WTC11 (cell line): ENCODE measurements at regions of chr7 and their contacts with region 1.

Region 1: DNA sequence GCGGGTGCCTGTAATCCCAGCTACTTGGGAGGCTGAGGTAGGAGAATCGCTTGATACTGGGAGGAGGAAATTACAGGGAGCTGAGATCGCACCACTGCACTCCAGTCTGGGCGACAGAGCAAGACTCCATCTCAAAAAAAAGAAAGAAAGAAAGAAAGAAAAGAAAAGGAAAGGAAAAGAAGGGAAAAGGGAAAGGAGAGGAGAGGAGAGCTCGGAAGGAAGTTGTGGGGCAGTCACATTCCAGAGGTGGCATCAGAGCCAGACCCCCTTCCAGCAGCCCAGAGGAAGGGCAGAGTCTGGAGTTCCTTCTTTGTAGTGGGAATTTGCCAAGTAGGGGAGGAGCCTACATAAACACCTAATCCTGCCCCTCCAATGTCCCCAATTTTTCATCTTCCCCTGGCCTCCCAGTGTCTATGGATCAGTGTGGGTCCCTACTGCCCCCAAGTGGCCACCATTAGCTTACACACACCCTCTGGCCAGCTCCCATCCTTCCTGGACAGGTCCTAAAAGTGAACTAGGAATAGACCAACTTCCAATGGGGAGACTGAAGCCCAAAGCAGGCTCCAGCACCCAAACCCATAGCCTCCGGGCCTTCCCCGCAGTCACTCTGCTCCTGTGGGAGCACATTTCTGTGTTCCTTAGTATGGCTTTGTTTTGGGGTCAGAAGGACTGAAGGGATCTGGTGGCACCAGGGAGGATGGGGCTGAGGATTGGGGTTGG is 39.6 kb upstream of the HSPB1 start:
- DNase-seq: peak; percentile 82
- ATAC-seq: peak; percentile 50
- H3K4me3 Mint-ChIP-seq: no peak overlapping the region
- H3K27ac Mint-ChIP-seq: peak overlapping the region; percentile 79; the same call in 1 of the 2 replicates
- H3K4me1 Mint-ChIP-seq: peaks cover 32% of the 10 kb centered on the region
- H3K27me3 Mint-ChIP-seq: no peaks in the 10 kb centered on the region; the same call in 1 of the 2 replicates
- CTCF ChIP-seq: peak; percentile 77

Region 2: DNA sequence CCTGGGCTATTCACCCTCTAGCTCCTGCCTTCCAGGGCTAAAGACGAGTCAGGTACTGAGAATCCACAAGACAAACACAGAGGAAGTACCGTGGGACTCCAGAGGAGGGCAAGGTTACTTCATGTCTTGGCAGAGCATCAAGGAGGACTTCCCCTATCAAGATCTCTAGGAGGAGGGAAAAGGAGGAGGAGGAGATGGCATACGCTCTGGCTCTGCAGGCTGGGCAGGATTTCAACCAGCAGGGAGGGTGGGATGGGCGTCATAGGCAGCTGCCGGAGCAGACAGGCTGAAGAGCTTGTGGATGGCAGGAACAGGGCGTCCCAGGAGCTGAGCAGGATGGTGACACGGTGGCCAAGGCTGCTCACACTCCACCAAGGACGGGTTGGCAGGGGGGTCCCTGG is 193.6 kb before region 1 on chr7:
- CTCF ChIA-PET with region 1: interaction called, 23 read pairs
- POLR2A ChIA-PET with region 1: interaction called, 4 read pairs
- DNase-seq: peak; percentile 43
- ATAC-seq: peak; percentile 64
- H3K4me3 Mint-ChIP-seq: no peak overlapping the region
- H3K27ac Mint-ChIP-seq: peak overlapping the region; percentile 57; the same call in 1 of the 2 replicates
- H3K4me1 Mint-ChIP-seq: peaks cover 3% of the 10 kb centered on the region; the same call in 1 of the 2 replicates
- H3K27me3 Mint-ChIP-seq: no peaks in the 10 kb centered on the region
- CTCF ChIP-seq: no peak

Region 3: DNA sequence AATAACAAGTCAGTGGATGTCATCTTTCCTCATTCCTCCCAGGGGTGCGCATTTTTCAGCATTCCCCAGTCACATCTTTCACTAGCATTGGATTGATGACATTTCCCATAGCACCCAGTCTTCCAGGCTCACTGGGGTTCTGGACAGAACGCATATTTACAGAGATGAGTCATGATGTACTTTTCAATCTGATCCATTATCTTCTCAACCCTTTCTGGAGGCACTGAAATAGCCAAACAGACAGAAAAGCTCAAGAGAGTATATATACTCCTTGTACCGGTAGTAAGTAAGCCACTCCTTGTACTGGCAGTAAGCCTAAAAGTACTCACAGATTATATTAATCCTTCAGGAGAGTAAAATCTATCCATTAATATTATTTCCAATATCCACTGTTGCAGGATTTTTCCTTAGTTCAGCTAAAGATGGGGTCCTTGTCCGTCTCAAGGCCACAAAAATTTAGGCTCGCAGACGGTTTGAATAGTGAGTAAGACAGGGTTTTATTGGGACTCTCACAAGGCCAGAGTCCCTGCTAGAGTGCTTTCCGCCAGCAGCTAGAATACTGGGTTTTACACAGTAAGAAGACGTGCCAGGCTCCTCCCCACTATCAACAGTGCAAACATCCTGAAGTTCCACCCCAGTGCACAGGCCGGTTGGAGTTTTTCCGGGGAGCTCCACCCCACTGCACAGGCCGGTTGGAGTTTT is 154.2 kb before region 1 on chr7:
- CTCF ChIA-PET with region 1: no interaction called
- POLR2A ChIA-PET with region 1: no interaction called
- DNase-seq: no peak
- ATAC-seq: no peak
- H3K4me3 Mint-ChIP-seq: no peak overlapping the region
- H3K27ac Mint-ChIP-seq: peak overlapping the region; percentile 25; the same call in 1 of the 2 replicates
- H3K4me1 Mint-ChIP-seq: no peaks in the 10 kb centered on the region; the same call in none of the 2 replicates
- H3K27me3 Mint-ChIP-seq: no peaks in the 10 kb centered on the region
- CTCF ChIP-seq: no peak

Region 4: GRCh38 chr7:76133839-76134238 is 129.0 kb before region 1 on chr7:
- CTCF ChIA-PET with region 1: no interaction called
- POLR2A ChIA-PET with region 1: no interaction called
- DNase-seq: no peak
- ATAC-seq: no peak
- H3K4me3 Mint-ChIP-seq: no peak overlapping the region
- H3K27ac Mint-ChIP-seq: no peak overlapping the region
- H3K4me1 Mint-ChIP-seq: no peaks in the 10 kb centered on the region
- H3K27me3 Mint-ChIP-seq: no peaks in the 10 kb centered on the region
- CTCF ChIP-seq: no peak

Region 5: DNA sequence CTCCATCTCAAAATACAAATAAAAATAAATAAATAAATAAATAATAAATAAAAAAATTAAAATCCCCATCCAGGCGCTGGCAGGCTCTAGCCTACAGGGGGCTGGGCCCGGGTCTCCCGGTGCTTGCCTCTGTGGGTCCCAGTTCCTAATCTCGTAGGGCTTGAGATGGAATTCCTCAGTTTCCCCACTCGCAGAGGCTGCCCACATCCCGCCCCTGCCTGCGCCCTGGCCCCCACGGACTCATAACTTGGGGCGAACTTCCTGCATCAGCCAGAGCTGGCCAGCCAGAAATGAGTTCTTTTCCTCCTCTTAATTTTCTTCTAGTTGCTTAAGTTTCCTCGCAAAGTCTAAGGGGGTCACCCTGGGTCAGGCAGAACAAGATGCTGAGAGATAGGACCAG is 83.2 kb before region 1 on chr7:
- CTCF ChIA-PET with region 1: interaction called, 103 read pairs
- POLR2A ChIA-PET with region 1: interaction called, 5 read pairs
- DNase-seq: no peak
- ATAC-seq: no peak
- H3K4me3 Mint-ChIP-seq: no peak overlapping the region
- H3K27ac Mint-ChIP-seq: no peak overlapping the region
- H3K4me1 Mint-ChIP-seq: peaks cover 5% of the 10 kb centered on the region; the same call in 1 of the 2 replicates
- H3K27me3 Mint-ChIP-seq: no peaks in the 10 kb centered on the region; the same call in none of the 2 replicates
- CTCF ChIP-seq: no peak

Region 6: GRCh38 chr7:76201730-76202665 is 60.8 kb before region 1 on chr7 and contains the start of gene SRRM3:
- CTCF ChIA-PET with region 1: interaction called, 67 read pairs
- POLR2A ChIA-PET with region 1: no interaction called
- DNase-seq: peak; percentile 91
- ATAC-seq: peak; percentile 73
- H3K4me3 Mint-ChIP-seq: peak within 1 kb of the TSS; percentile 66
- H3K27ac Mint-ChIP-seq: no peak within 1 kb of the TSS
- H3K4me1 Mint-ChIP-seq: peaks cover 31% of the 10 kb centered on the region
- H3K27me3 Mint-ChIP-seq: peaks cover 22% of the 10 kb centered on the region
- CTCF ChIP-seq: peak; percentile 54; the same call in 1 of the 2 replicates
- total RNA-seq, gene SRRM3: 17.7 to 24.6 TPM (median 20.7 TPM) in 3 replicates

Region 7: GRCh38 chr7:76234931-76235441 is 27.9 kb before region 1 on chr7:
- CTCF ChIA-PET with region 1: interaction called, 48 read pairs
- POLR2A ChIA-PET with region 1: interaction called, 19 read pairs
- DNase-seq: peak; percentile 98
- ATAC-seq: peak; percentile 86
- H3K4me3 Mint-ChIP-seq: peak overlapping the region; percentile 70
- H3K27ac Mint-ChIP-seq: peak overlapping the region; percentile 89; the same call in 1 of the 2 replicates
- H3K4me1 Mint-ChIP-seq: peaks cover 69% of the 10 kb centered on the region
- H3K27me3 Mint-ChIP-seq: no peaks in the 10 kb centered on the region; the same call in none of the 2 replicates
- CTCF ChIP-seq: no peak

Region 8: GRCh38 chr7:76282344-76283253 is 19.8 kb after region 1 on chr7:
- CTCF ChIA-PET with region 1: interaction called, 34 read pairs
- POLR2A ChIA-PET with region 1: no interaction called
- DNase-seq: peak; percentile 71
- ATAC-seq: peak; percentile 66
- H3K4me3 Mint-ChIP-seq: peak overlapping the region; percentile 83
- H3K27ac Mint-ChIP-seq: no peak overlapping the region
- H3K4me1 Mint-ChIP-seq: peaks cover 19% of the 10 kb centered on the region
- H3K27me3 Mint-ChIP-seq: peaks cover 57% of the 10 kb centered on the region
- CTCF ChIP-seq: no peak